CD14-positive monocyte (primary cell): ENCODE measurements at regions of chr1 and their contacts with region 1.

Region 1: DNA sequence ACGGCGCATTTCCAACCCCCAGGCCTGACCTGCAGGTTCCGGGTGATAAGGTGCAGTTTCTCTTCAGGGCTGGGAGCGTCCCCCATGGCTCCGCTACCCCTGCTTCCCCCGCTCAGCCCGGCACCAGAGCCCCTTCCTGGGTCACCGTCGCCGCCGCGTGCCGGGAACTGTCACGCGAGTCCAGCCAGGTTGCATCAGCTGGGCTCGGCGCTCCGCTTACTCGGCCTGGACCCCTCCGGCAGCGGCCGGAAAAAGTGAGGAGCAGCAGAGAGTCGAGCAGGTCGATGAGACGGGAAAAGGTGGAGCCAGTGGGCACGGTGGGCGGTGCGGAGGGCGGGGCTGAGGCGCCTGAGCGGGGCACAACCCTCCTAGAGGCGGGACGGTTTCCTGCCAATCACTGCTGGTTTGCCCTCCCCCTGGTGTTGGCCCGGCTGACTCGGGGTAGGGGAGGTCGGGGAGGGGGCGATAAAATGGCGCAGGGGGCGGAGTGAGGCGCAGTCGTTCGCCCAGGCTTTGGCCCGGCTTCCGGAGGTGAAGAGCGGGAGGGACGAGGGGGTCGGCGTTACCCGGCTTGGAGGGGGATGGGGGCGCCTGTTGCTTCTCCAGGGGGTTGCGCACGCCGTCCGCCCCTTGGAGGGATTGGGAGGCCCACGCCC is at the starts of genes S100PBP and YARS1:
- DNase-seq: peak; percentile 98 to 99 (median 98)
- H3K4me3 ChIP-seq: peak within 1 kb of the TSS; percentile 79 to 100 (median 97)
- H3K4me3 Mint-ChIP-seq: peak within 1 kb of the TSS; percentile 92 to 99
- H3K27ac ChIP-seq: peak within 1 kb of the TSS; percentile 93 to 99
- H3K27ac Mint-ChIP-seq: peak within 1 kb of the TSS; percentile 95 to 98 (median 98)
- H3K4me1 ChIP-seq: peaks cover 30 to 46% of the 10 kb centered on the region in 2 donors
- H3K4me1 Mint-ChIP-seq: peaks cover 44% of the 10 kb centered on the region
- H3K27me3 ChIP-seq: no peaks in the 10 kb centered on the region
- H3K27me3 Mint-ChIP-seq: peaks cover 0 to 2% (median 1%) of the 10 kb centered on the region in 3 donors
- CTCF ChIP-seq: no peak
- polyA plus RNA-seq, gene S100PBP: 6.6 to 17.4 (median 7.1) TPM
- polyA plus RNA-seq, gene YARS1: 38.1 to 42.7 (median 39.8) TPM

Region 2: GRCh38 chr1:32650752-32651460 is 166.4 kb before region 1 on chr1 and contains the start of gene RBBP4:
- intact Hi-C with region 1: loop called (anchors 5 kb)
- DNase-seq: peak; percentile 97 to 98 (median 98)
- H3K4me3 ChIP-seq: peak within 1 kb of the TSS; percentile 85 to 99 (median 91)
- H3K4me3 Mint-ChIP-seq: peak within 1 kb of the TSS; percentile 92 to 95
- H3K27ac ChIP-seq: peak within 1 kb of the TSS; percentile 93 to 98
- H3K27ac Mint-ChIP-seq: peak within 1 kb of the TSS; percentile 94 to 100 (median 100)
- H3K4me1 ChIP-seq: peaks cover 34 to 41% of the 10 kb centered on the region in 2 donors
- H3K4me1 Mint-ChIP-seq: peaks cover 42% of the 10 kb centered on the region
- H3K27me3 ChIP-seq: no peaks in the 10 kb centered on the region
- H3K27me3 Mint-ChIP-seq: no peaks in the 10 kb centered on the region
- CTCF ChIP-seq: no peak
- polyA plus RNA-seq, gene RBBP4: 60.6 to 307 (median 274) TPM

Region 3: DNA sequence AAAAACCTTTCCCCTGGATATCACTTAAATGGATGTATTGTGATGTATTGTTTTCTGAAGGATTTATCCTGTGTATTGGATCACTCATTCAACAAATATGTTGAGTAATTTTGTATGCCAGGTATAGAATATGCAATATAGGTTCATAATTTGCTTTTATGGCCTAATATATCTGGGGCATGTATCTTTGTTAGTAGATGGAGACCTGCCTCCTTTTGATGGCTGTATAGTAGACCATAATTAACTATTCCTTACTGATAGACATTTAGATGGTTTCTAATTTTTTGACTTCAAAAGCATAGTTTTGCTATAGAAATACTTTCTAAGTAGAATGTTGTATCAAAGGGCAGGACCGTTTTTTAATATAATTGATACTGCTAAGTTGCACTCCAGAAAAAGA is 157.7 kb before region 1 on chr1:
- intact Hi-C with region 1: loop called (anchors 5 kb)
- DNase-seq: no peak
- H3K4me3 ChIP-seq: no peak overlapping the region
- H3K4me3 Mint-ChIP-seq: no peak overlapping the region
- H3K27ac ChIP-seq: no peak overlapping the region
- H3K27ac Mint-ChIP-seq: no peak overlapping the region
- H3K4me1 ChIP-seq: no peaks in the 10 kb centered on the region
- H3K4me1 Mint-ChIP-seq: peaks cover 2% of the 10 kb centered on the region
- H3K27me3 ChIP-seq: no peaks in the 10 kb centered on the region
- H3K27me3 Mint-ChIP-seq: no peaks in the 10 kb centered on the region
- CTCF ChIP-seq: no peak

Region 4: DNA sequence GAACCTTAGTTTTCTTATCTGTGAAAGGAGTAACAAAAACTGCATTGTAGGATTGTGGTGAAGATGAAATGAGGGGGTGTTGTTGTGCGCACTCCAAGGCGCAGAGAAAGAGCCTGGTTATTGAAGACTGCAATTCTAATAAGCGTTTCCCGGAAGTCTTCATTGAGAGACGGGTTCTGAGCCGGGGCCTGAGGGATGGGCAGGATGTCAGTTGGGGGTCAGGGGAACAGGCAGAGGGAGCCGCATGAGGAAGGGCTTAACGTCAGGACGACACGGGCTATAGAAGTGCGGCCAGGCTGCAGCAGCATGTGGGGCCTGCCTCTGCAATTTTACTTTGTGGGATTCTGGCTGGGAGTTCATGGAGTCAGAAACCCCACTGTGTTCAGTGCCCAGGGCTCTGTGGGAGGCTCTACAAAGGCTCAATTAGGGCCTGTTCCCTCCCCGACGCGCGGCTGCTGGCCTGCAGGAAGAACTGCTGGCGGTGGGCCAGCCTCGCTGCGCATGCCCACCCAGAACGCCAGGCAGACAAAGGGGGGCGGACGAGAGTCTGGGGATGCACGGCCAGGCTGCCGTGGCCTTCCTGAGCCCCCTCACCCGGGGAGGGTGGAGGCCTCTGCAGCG is 343.9 kb after region 1 on chr1:
- intact Hi-C with region 1: no loop called
- DNase-seq: no peak
- H3K4me3 ChIP-seq: no peak overlapping the region
- H3K4me3 Mint-ChIP-seq: no peak overlapping the region
- H3K27ac ChIP-seq: no peak overlapping the region
- H3K27ac Mint-ChIP-seq: peak overlapping the region in 1 of 7 donors; percentile 25
- H3K4me1 ChIP-seq: no peaks in the 10 kb centered on the region
- H3K4me1 Mint-ChIP-seq: peaks cover 5% of the 10 kb centered on the region
- H3K27me3 ChIP-seq: no peaks in the 10 kb centered on the region
- H3K27me3 Mint-ChIP-seq: peaks cover 4 to 11% (median 8%) of the 10 kb centered on the region in 3 donors
- CTCF ChIP-seq: no peak